CD8-positive, alpha-beta memory T cell (primary cell): ENCODE measurements at regions of chr1 and their contacts with region 1.

Region 1: DNA sequence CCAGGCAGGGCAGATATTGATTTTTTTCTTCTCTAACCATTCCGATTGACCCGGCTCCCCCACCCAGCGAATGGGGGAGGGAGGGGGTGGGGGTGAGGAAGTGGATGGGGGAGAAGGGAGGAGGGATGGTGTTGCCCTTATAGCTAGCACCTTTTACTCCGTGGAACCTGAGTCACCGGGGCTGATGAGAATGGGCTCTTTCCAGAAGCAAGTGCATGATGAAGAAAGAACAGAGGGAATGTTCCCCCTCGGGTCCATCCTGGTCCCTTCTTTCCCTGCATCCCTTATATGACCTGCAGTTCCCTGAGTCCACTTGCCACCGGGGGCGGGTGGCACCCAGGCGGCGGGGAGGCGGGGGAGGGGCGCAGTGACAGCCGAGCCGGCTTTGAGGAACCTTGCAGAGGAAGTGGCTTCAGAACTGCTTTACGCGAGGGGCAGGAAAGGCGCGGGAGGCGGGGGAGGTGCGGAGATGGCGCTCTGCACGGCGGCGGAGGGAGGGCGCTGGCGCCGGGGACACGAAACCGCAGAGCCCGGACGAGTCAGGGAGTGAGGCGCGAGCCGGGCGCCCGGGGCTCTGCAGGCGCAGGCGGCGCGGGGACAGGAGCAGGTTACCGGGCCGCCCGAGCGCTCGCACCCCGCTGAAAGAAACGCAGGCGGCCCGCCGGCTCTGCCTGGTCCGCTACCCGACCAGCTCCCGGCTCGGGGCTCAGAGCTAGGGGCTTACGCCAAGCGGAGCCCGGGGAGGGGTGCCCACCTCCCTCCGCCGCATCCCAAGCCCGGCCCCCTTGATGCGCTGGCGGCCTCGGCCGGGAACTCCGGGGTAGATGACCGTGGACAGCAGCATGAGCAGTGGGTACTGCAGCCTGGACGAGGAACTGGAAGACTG is 49.7 kb downstream of the RASSF5 start:
- DNase-seq: peak; percentile 84 to 91 (median 91)
- H3K4me3 ChIP-seq: peak overlapping the region; percentile 99
- H3K4me3 Mint-ChIP-seq: peak overlapping the region; percentile 96 to 100 (median 98)
- H3K27ac ChIP-seq: peak overlapping the region; percentile 92
- H3K27ac Mint-ChIP-seq: peak overlapping the region; percentile 87 to 99 (median 97)
- H3K4me1 ChIP-seq: peaks cover 71% of the 10 kb centered on the region
- H3K4me1 Mint-ChIP-seq: peaks cover 72 to 80% (median 76%) of the 10 kb centered on the region in 3 donors
- H3K27me3 ChIP-seq: no peaks in the 10 kb centered on the region
- H3K27me3 Mint-ChIP-seq: peaks cover 0 to 3% of the 10 kb centered on the region in 2 donors

Region 2: GRCh38 chr1:206575165-206575893 is 18.3 kb after region 1 on chr1:
- CTCF ChIA-PET with region 1: interaction called, 503 read pairs
- POLR2A ChIA-PET with region 1: interaction called, 45 read pairs
- DNase-seq: peak in 4 of 5 donors; percentile 43 to 83 (median 69)
- H3K4me3 ChIP-seq: peak overlapping the region; percentile 73
- H3K4me3 Mint-ChIP-seq: peak overlapping the region; percentile 68 to 90 (median 84)
- H3K27ac ChIP-seq: peak overlapping the region; percentile 85
- H3K27ac Mint-ChIP-seq: peak overlapping the region; percentile 96 to 100 (median 98)
- H3K4me1 ChIP-seq: peaks cover 99% of the 10 kb centered on the region
- H3K4me1 Mint-ChIP-seq: peaks cover 95 to 100% (median 99%) of the 10 kb centered on the region in 3 donors
- H3K27me3 ChIP-seq: no peaks in the 10 kb centered on the region
- H3K27me3 Mint-ChIP-seq: no peaks in the 10 kb centered on the region

Region 3: GRCh38 chr1:206583707-206584648 is 27.0 kb after region 1 on chr1:
- CTCF ChIA-PET with region 1: interaction called, 503 read pairs
- POLR2A ChIA-PET with region 1: interaction called, 45 read pairs
- DNase-seq: peak; percentile 76 to 86 (median 80)
- H3K4me3 ChIP-seq: peak overlapping the region; percentile 22
- H3K4me3 Mint-ChIP-seq: peak overlapping the region; percentile 59 to 92 (median 88)
- H3K27ac ChIP-seq: peak overlapping the region; percentile 78
- H3K27ac Mint-ChIP-seq: peak overlapping the region; percentile 92 to 100 (median 98)
- H3K4me1 ChIP-seq: peaks cover 51% of the 10 kb centered on the region
- H3K4me1 Mint-ChIP-seq: peaks cover 58 to 84% (median 72%) of the 10 kb centered on the region in 3 donors
- H3K27me3 ChIP-seq: no peaks in the 10 kb centered on the region
- H3K27me3 Mint-ChIP-seq: peaks cover 0 to 1% of the 10 kb centered on the region in 2 donors